Heart right ventricle (tissue), 16 donors: ENCODE measurements at regions of chr5 and their contacts with region 1.

Region 1: DNA sequence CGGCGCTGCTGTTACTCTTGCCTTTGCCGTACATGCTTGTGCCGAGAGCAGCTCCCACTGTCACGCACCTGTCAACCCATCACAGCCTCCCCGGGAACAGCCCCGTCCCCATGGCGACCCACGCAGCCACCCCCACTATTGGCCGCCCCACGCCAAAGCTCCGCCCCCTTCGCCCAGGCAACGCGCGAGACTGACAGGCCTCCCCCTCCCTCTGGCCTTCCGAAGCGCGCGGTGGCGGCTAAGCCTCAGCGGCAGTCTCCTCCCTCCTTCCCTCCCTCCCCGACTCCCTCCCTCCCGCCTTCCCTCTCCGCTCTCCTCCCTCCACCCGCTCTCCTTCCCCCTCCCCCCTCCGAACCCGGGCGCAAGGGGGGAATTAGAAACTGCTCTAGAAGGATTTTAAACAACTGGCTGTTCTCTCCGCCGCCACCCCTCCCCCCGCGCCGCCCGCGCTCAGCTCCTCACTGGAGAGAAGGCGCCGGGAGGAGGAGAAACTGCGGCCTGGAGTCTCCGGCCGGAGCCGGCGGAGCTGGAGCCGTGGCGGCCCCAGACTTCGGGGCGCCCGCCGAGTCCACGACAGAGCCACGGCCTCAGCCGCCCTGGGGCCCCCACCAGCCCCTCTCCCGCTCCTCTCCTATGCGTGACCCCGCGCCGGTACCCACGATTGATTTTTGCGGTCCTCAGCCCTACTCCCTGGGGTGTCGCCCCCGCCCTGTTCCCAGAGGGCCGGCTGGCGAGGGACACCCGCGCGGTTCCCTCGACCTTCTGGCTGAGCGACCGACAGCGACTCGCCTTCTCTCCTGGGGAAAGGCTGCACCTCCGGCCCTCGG is at the start of gene SSBP2:
- DNase-seq: peak; percentile 100
- ATAC-seq: peak; percentile 93 to 98 (median 97)
- H3K4me3 ChIP-seq: peak within 1 kb of the TSS; percentile 50 to 89 (median 84)
- H3K27ac ChIP-seq: peak within 1 kb of the TSS; percentile 94 to 100 (median 99)
- H3K4me1 ChIP-seq: peaks cover 0 to 72% (median 45%) of the 10 kb centered on the region in 9 donors
- H3K27me3 ChIP-seq: no peaks in the 10 kb centered on the region
- CTCF ChIP-seq: peak in 1 of 9 donors; percentile 9
- total RNA-seq, gene SSBP2: 30.0 to 85.9 (median 56.2) TPM

Region 2: GRCh38 chr5:81425569-81425968 is 325.7 kb before region 1 on chr5:
- intact Hi-C with region 1: loop called in 6 of 10 experiments (anchors 5 to 10 kb)
- DNase-seq: no peak
- ATAC-seq: peak in 7 of 8 donors; percentile 33 to 81 (median 65)
- H3K4me3 ChIP-seq: no peak overlapping the region
- H3K27ac ChIP-seq: peak overlapping the region in 4 of 10 donors; percentile 14 to 57 (median 30)
- H3K4me1 ChIP-seq: peaks cover 0 to 34% (median 20%) of the 10 kb centered on the region in 9 donors
- H3K27me3 ChIP-seq: no peaks in the 10 kb centered on the region
- CTCF ChIP-seq: peak; percentile 63 to 80 (median 71)

Region 3: DNA sequence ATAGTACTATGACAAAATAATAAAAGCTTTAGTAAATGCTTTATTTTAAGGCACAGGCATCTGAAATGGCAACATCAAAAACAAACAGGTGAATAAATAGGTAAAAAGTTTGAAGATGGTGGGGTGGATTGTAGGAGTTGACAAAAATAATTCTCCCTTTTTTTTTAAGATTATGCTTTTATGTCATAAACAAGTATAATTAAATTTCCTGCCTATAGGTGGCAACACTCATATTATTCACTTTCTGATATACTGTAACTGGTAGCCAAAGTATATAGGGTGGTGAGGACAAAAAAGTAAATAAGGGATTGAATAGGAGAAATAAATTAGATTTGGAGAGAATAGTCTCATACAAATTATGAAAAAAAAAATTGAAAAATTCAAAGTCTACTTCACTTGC is 237.2 kb before region 1 on chr5:
- intact Hi-C with region 1: loop called in 5 of 10 experiments (anchors 5 kb)
- DNase-seq: no peak
- ATAC-seq: no peak
- H3K4me3 ChIP-seq: no peak overlapping the region
- H3K27ac ChIP-seq: no peak overlapping the region
- H3K4me1 ChIP-seq: no peaks in the 10 kb centered on the region
- H3K27me3 ChIP-seq: no peaks in the 10 kb centered on the region
- CTCF ChIP-seq: peak in 6 of 9 donors; percentile 10 to 41 (median 30)

Region 4: DNA sequence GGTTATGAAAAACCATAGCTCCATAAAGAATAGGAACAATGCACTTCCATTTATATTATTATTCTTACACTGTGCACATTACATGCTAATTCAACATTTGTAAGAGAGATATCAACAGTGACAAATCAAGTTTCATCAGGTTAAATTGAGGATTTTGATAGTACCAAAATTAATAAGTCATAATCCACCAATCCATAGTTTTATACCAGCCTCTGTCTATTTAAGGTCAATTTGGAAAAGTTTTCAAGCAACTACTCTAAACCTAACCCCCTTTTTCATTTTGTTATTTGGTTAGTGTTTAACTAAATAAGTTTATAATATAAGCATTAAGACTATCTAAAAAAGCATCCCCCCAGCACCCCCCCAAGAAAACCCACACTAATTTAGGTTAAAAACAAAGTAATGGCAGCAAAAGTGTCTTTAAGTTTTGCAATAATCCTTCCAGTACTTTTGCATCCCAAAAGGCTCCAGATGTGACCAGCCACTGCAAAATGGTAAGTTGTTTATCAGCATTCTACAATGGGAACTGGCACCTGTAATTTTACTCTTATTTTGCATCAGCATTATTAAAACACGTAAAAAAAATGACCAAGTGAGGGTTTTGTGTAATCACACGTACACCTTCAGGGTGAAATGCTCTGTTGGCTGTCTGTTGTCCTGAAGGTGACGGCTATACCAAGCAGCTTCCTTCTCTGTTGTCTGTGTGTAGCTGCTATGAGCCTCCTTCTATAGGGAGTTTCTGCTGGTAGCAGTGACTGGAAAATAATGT is 36.4 kb after region 1 on chr5:
- intact Hi-C with region 1: loop called in 6 of 10 experiments (anchors 1 to 5 kb)
- DNase-seq: peak in 1 of 2 donors; percentile 86
- ATAC-seq: peak in 7 of 8 donors; percentile 31 to 83 (median 73)
- H3K4me3 ChIP-seq: peak overlapping the region in 3 of 10 donors; percentile 5 to 35 (median 18)
- H3K27ac ChIP-seq: peak overlapping the region in 6 of 10 donors; percentile 9 to 69 (median 46)
- H3K4me1 ChIP-seq: peaks cover 0 to 28% (median 23%) of the 10 kb centered on the region in 9 donors
- H3K27me3 ChIP-seq: no peaks in the 10 kb centered on the region
- CTCF ChIP-seq: no peak

Region 5: GRCh38 chr5:81971712-81972495 is 220.7 kb after region 1 on chr5 and contains the start of gene ATG10:
- intact Hi-C with region 1: loop called in 6 of 10 experiments (anchors 2 to 10 kb)
- DNase-seq: peak; percentile 91 to 94
- ATAC-seq: peak; percentile 99 to 100 (median 99)
- H3K4me3 ChIP-seq: peak within 1 kb of the TSS; percentile 37 to 86 (median 68)
- H3K27ac ChIP-seq: peak within 1 kb of the TSS; percentile 97 to 100 (median 99)
- H3K4me1 ChIP-seq: peaks cover 0 to 20% (median 0%) of the 10 kb centered on the region in 9 donors
- H3K27me3 ChIP-seq: no peaks in the 10 kb centered on the region
- CTCF ChIP-seq: no peak
- total RNA-seq, gene ATG10: 4.6 to 8.0 (median 7.2) TPM